Caco-2 (cell line): ENCODE measurements at regions of chr12 and their contacts with region 1.

Region 1: DNA sequence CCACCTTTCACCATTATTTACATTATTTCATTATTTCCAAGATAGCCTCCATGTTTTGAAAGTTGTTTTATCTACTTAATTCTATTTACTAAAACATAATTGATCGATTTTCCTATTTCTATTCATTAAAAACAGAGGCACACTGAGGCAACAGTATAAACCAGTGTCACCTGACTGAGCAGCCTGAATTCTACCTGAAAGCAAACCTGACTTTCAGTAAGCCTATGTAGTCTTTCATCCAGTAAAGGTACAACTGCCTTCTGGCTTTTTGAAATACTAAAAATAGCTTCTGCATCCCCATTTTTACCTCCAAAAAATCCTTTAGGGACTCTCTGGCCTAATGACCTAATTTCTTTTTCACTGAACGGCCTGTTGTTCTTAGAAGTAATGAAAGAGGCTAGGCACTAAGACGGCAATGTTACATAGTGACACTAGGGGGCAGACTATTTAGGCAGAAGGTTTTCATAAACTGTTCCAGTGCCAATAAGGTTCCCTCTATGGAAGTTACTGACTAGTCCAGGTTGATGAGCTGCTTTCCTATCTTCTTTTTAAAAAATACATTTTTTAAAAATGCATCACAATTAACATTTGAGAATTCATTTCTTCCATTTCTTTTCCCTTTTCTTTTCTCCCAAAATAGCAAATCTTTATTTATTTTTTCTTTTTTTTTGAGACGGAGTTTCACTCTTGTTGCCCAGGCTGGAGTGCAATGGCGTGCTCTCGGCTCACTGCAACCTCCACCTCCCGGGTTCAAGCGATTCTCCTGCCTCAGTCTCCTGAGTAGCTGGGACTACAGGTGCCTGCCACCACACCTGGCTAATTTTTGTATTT is 17.5 kb downstream of the ANAPC5 start:
- DNase-seq: peak in 1 of 2 experiments; percentile 58
- H3K4me3 ChIP-seq: no peak overlapping the region
- H3K4me3 Mint-ChIP-seq: no peak overlapping the region
- H3K27ac Mint-ChIP-seq: no peak overlapping the region
- H3K4me1 ChIP-seq: no peaks in the 10 kb centered on the region
- H3K4me1 Mint-ChIP-seq: no peaks in the 10 kb centered on the region
- H3K27me3 ChIP-seq: no peaks in the 10 kb centered on the region
- H3K27me3 Mint-ChIP-seq: no peaks in the 10 kb centered on the region
- CTCF ChIP-seq: peak; percentile 68 to 71

Region 2: DNA sequence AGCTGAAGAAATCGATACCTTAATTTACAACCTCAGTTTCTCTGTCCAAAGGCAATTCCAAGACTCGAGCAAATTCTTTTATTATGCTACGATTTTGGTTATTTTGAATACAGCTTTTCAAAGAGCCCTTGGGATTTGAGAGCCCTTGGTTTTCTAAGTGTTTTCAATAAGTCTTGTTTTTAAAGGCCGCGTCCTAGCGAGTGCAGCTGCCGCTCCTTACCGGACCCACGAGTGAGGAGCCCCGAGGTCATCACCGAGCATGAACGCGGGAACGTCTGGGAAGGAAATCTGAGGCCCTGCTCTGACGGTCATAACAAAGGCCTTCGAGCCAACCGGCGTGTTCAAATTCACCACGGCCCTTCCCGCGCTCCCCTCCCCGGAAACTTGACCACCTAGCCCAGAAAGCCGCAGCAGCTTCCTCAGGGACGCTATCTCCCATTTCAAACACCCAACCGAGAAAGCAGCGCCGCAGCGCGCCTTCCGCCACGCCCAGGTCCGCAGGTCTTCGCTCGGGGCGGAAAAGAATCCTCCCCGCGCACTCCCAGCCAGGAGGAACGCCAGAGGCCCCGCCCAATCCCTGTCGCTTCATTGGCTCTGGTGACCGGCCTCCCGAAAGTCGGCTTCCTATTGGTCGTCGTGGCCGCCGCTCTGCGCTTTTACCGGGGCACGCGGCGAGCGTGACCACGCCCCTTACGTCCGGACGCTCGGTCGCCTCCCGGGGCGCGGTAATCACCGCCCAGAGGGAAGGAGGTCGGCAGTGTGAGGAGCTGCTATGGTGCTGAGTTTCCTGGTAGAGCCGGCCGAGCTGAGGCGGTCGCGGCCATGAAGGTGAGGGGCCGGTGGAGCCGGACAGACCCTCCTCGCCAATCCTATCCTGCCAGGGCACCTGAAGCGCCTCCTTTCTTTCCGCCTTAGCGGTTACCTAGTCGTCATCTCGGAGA is 64.9 kb after region 1 on chr12 and contains the start of gene RNF34:
- CTCF ChIA-PET with region 1: interaction called, 21 read pairs
- POLR2A ChIA-PET with region 1: no interaction called
- intact Hi-C with region 1: no loop called
- DNase-seq: peak; percentile 99
- H3K4me3 ChIP-seq: peak within 1 kb of the TSS; percentile 99
- H3K4me3 Mint-ChIP-seq: peak within 1 kb of the TSS; percentile 90
- H3K27ac Mint-ChIP-seq: peak within 1 kb of the TSS; percentile 75
- H3K4me1 ChIP-seq: no peaks in the 10 kb centered on the region
- H3K4me1 Mint-ChIP-seq: peaks cover 13% of the 10 kb centered on the region
- H3K27me3 ChIP-seq: no peaks in the 10 kb centered on the region
- H3K27me3 Mint-ChIP-seq: no peaks in the 10 kb centered on the region
- CTCF ChIP-seq: no peak
- total RNA-seq, gene RNF34: 50.5 and 54.1 TPM in 2 replicates

Region 3: DNA sequence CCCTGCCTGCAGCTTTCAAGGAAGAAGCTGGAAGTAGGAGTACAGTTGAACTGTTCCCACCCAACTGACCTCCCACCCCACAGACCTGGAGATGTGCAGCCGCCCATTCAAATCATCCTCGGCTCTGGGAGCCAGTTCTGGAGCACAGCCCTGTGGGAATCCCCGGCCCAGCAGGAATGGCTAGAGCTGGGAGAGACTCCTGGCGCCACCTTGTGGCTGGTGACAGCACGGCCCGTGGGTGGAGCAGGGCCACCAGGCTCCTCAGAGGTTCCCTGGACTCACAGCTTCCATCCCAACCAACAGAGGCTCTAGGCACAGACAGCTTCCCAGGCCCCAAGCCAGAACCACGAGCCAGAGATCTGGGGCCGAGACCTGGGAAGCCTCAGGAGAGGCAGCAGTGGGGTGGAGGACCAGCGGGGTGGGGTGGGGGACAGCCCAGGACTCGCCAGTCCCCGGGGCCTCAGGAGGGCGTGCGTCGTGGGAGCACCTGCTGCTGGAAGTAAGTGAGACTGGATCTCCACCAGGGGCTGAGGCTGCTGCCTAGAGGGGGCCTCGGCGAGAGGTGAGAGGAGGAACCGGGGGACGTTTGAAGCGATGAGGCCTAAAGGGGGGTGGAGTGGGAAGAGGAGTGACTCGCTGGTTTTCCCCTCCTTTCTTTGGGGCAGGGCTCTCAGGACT is 108.6 kb after region 1 on chr12:
- CTCF ChIA-PET with region 1: interaction called, 5 read pairs
- POLR2A ChIA-PET with region 1: no interaction called
- intact Hi-C with region 1: loop called (anchors 1 kb)
- DNase-seq: peak; percentile 79 to 88
- H3K4me3 ChIP-seq: no peak overlapping the region
- H3K4me3 Mint-ChIP-seq: no peak overlapping the region
- H3K27ac Mint-ChIP-seq: no peak overlapping the region
- H3K4me1 ChIP-seq: no peaks in the 10 kb centered on the region
- H3K4me1 Mint-ChIP-seq: no peaks in the 10 kb centered on the region
- H3K27me3 ChIP-seq: no peaks in the 10 kb centered on the region
- H3K27me3 Mint-ChIP-seq: no peaks in the 10 kb centered on the region
- CTCF ChIP-seq: peak; percentile 78 to 93